ENCODE measurements at regions of chrX and their contacts with region 1.

Region 1: GRCh38 chrX:41381685-41382084 is 47.7 kb downstream of the DDX3X start:
- DNase-seq: no peak
- ATAC-seq: no peak
- H3K4me3 Mint-ChIP-seq: no peak overlapping the region
- H3K27ac Mint-ChIP-seq: peak overlapping the region; percentile 13
- H3K4me1 Mint-ChIP-seq: peaks cover 36% of the 10 kb centered on the region
- H3K27me3 Mint-ChIP-seq: no peaks in the 10 kb centered on the region

Region 2: DNA sequence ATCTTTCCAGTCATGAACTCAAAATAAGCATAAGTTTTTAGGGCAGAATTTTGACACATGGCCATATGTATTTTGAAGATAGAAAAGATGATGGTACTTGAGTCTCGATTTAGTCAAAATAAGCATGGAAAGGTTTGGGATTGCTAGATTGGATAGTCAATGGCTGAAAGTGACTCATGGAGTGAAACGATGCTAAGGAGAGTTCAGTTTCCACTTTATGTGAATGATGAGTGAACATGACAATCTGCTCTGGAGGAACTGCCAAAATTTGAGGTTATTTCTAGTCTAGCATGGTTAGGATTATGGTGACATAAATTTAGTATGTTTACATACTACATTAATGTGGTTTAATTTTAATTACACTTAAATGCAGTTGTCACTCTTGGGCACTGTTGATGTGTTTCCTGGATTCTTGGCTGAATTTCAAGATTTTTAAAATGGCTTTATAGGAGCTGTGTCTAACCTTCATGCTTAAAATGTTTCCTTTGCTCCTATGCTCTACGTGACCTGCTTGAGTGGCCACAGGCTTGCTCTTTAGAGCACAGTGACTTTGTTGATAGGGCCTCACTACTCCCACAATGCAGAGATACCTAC is 30.6 kb before region 1 on chrX:
- CTCF ChIA-PET with region 1: no interaction called
- POLR2A ChIA-PET with region 1: interaction called, 3 read pairs
- intact Hi-C with region 1: loop called in 1 of 2 experiments (anchors 5 kb)
- DNase-seq: no peak
- ATAC-seq: peak; percentile 60
- H3K4me3 Mint-ChIP-seq: no peak overlapping the region
- H3K27ac Mint-ChIP-seq: peak overlapping the region; percentile 70
- H3K4me1 Mint-ChIP-seq: peaks cover 39% of the 10 kb centered on the region
- H3K27me3 Mint-ChIP-seq: no peaks in the 10 kb centered on the region

Measured in activated CD4-positive, alpha-beta T cell treated with anti-CD3 and anti-CD28 coated beads for 36 hours (primary cell).